ENCODE measurements at regions of chr14 and their contacts with region 1.

Region 1: DNA sequence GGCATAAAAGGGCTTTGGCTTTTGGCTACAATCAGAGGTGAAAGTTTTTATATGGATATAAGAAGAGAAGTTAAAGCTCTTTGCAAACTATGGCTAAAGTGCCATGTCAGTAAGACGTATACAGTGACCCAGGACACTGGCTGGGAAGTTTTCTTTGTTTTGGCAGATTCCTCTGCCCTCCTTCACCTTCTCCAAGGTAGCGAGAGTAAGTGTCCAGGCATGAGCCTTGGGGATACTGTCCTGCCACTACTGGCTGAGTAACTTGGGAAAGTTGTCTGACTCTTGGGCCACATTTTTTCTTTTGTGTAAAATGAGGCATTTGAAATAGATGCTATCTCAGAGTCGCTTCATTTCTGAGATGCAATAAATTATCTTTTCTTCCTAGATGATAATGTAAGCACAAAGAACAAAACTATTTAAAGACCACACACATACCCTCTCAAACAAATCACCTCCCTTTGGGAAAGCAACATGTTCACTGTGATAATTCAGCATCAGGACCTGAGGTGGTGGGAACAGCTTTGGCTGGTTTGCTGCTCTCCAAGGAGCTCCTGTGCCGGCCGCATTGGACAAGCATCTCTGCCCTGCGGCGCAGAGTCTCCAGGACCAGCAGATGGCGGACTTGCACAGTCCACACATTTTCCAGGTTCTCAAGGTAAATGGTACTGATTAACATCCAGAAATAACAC is 106.3 kb downstream of the PTCSC3 start:
- DNase-seq: peak; percentile 32
- ATAC-seq: peak; percentile 91
- H3K4me3 ChIP-seq: no peak overlapping the region
- H3K27ac ChIP-seq: no peak overlapping the region
- H3K4me1 ChIP-seq: no peaks in the 10 kb centered on the region
- H3K27me3 ChIP-seq: peaks cover 6% of the 10 kb centered on the region; the same call in 1 of the 2 replicates
- CTCF ChIP-seq: peak; percentile 80

Region 2: DNA sequence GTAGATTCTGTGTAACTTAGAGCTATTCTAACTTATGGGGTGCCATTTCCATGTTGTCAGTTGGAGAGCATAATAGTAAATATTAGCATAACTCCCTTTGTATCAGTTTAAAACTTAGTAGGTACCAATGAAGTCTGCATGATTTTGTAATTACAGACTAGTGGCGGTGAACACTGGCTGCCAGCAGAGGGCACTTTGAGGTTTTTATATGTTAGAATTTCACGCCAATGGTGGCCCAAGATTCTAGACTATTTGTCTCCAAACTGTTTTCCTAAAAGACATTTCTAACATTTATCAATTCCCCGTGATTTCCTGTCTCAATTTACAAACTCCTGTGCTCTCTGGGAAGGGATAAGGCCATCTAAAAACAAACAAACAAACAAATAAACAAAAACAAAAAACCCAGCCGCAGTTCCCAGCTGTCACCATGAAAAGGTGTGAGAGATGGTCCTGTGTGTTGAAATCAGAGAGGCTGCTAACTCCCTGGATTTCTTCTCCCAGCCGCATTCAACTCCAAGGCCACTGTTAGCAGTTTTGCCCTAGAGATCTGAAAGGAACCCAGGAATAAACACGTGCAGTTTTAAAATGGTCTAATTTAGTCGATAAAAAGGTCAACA is 186.4 kb before region 1 on chr14:
- CTCF ChIA-PET with region 1: interaction called, 8 read pairs
- POLR2A ChIA-PET with region 1: no interaction called
- in situ Hi-C with region 1: no loop called
- intact Hi-C with region 1: loop called (anchors 10 kb)
- DNase-seq: peak; percentile 20
- ATAC-seq: no peak
- H3K4me3 ChIP-seq: no peak overlapping the region
- H3K27ac ChIP-seq: no peak overlapping the region
- H3K4me1 ChIP-seq: no peaks in the 10 kb centered on the region
- H3K27me3 ChIP-seq: no peaks in the 10 kb centered on the region
- CTCF ChIP-seq: peak; percentile 75

Region 3: DNA sequence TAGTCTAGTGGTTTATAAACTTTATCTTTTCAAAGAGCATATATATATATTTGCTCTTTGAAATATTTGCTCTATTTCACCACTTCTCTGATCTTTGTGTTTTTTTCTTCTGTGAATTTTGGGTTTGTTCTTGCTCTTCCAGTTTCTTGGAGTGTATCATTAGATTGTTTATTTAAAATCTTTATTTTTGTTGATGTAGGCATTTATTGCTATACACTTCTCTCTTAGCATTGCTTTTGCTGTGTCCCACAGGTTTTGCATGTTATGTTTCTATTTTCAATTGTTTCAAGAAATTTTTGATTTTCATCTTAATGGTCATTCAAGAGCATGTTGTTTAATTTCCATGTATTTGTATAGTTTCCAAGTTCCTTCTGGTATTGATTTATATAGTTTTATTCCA is 174.9 kb before region 1 on chr14:
- CTCF ChIA-PET with region 1: no interaction called
- POLR2A ChIA-PET with region 1: no interaction called
- in situ Hi-C with region 1: no loop called
- intact Hi-C with region 1: no loop called
- DNase-seq: no peak
- ATAC-seq: no peak
- H3K4me3 ChIP-seq: no peak overlapping the region
- H3K27ac ChIP-seq: no peak overlapping the region
- H3K4me1 ChIP-seq: no peaks in the 10 kb centered on the region
- H3K27me3 ChIP-seq: no peaks in the 10 kb centered on the region
- CTCF ChIP-seq: no peak

Region 4: DNA sequence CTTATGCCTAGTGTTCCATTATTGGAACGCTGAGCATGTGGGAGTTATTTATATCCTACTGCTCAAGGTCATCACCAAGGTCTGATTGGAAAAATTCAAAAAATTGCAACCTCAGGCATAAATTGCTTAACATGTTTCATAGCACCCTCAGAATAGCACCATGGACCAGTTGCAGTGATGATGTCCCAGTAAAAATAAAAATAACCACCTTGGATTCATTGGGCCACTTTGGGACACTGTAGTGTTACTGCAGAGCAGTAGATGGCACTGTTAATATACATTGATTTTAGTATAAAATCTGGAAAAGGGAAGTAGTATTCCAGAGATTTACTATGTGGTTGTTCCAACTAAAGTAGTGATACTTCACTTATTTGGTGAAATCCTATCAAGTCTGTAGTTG is 137.3 kb after region 1 on chr14:
- CTCF ChIA-PET with region 1: no interaction called
- POLR2A ChIA-PET with region 1: no interaction called
- in situ Hi-C with region 1: no loop called
- intact Hi-C with region 1: loop called (anchors 10 kb)
- DNase-seq: no peak
- ATAC-seq: no peak; the same call in 1 of the 2 replicates
- H3K4me3 ChIP-seq: no peak overlapping the region
- H3K27ac ChIP-seq: no peak overlapping the region
- H3K4me1 ChIP-seq: no peaks in the 10 kb centered on the region
- H3K27me3 ChIP-seq: no peaks in the 10 kb centered on the region
- CTCF ChIP-seq: peak; percentile 47; the same call in 1 of the 2 replicates

Region 5: GRCh38 chr14:36373982-36374673 is 304.0 kb after region 1 on chr14:
- CTCF ChIA-PET with region 1: no interaction called
- POLR2A ChIA-PET with region 1: no interaction called
- in situ Hi-C with region 1: no loop called
- intact Hi-C with region 1: loop called (anchors 10 kb)
- DNase-seq: peak; percentile 41
- ATAC-seq: peak; percentile 82
- H3K4me3 ChIP-seq: no peak overlapping the region
- H3K27ac ChIP-seq: no peak overlapping the region
- H3K4me1 ChIP-seq: no peaks in the 10 kb centered on the region
- H3K27me3 ChIP-seq: no peaks in the 10 kb centered on the region
- CTCF ChIP-seq: peak; percentile 84

Region 6: DNA sequence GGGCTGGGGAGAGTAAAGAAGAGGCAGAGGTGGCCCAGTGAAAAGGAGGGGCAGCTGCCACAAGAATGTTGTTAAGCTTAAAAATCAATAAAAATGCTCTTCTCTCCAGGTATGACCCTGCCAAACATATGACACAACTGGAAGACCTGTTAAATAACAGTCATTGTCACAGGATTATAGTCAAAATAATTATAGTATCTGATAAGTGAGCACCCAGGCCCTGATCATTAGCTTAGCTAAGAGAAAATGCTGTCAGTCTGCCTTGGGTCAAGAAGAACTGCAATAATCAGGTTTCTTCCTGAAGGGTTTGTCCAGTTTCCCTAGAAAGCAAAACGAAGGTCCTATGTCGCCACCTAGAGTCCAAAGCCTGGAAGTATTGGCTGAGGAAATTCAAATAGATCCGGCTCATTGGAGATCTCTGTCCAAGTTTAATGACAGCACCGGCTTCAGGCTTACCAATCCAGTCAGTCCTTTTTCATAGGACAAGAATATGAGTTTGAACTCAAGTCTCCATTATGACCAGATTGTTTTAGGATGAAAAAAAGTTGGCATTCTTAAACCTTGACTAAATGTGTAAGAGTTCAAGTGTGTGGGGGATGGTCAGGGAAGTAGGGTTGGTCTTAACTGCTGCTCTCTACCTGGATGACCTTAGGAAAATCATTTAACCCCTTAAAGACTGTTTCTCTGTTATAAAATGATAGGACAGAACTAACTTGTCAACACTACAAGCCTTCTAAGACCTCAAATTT is 534.8 kb after region 1 on chr14:
- CTCF ChIA-PET with region 1: no interaction called
- POLR2A ChIA-PET with region 1: no interaction called
- in situ Hi-C with region 1: no loop called
- intact Hi-C with region 1: loop called (anchors 10 kb)
- DNase-seq: peak; percentile 55
- ATAC-seq: peak; percentile 72
- H3K4me3 ChIP-seq: no peak overlapping the region
- H3K27ac ChIP-seq: no peak overlapping the region
- H3K4me1 ChIP-seq: no peaks in the 10 kb centered on the region
- H3K27me3 ChIP-seq: 0 out of 2 replicates have a peak, but pooled peaks cover 2% of the 10 kb centered on the region
- CTCF ChIP-seq: peak; percentile 76